Activated naive CD4-positive, alpha-beta T cell treated with anti-CD3 and anti-CD28 coated beads, Interleukin-2, amount 10 ng/mL, durations not matched to agents 7 days and 5 days (primary cell): ENCODE measurements at regions of chr7 and their contacts with region 1.

Region 1: GRCh38 chr7:2248984-2249694 is 7.1 kb downstream of the NUDT1 start:
- DNase-seq: peak; percentile 37
- H3K4me3 Mint-ChIP-seq: peak overlapping the region; percentile 33
- H3K27ac Mint-ChIP-seq: peak overlapping the region; percentile 26
- H3K4me1 Mint-ChIP-seq: peaks cover 45% of the 10 kb centered on the region
- H3K27me3 Mint-ChIP-seq: no peaks in the 10 kb centered on the region

Region 2: DNA sequence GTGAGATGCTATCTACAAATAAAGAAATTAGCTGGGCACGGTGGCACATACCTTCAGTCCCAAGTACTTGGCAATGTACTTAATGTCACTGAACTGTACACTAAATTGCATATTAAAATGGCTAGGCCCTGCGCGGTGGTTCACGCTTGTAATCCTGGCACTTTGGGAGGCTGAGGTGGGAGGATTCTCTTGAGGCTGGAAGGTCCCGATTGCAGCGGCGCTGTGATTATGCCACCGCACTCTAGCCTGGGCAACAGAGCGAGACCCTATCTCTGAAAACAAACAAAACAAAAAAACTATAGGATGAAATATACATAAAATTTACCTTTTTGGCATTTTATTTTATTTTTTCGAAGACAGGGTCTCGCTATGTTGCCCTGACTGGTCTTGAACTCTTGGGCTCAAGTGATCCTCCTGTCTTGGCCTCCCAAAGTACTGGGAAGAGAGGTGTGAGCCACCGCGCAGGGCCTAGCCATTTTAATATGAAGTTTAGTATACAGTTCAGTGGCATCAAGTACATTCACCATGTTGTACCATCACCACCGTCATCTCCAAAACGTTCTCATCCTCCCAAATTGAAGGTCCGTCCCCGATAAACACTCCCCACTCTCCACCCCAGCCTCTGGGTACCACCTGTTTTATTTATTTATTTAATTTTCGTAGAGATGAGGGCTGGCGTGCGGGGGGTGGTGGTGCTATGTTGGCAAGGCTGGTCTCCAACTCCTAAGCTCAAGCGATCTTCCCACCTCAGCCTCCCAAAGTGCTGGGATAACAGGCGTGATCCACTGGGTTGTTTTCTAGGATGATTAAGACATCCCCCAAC is 104.2 kb after region 1 on chr7:
- CTCF ChIA-PET with region 1: interaction called, 12 read pairs
- DNase-seq: peak; percentile 24
- H3K4me3 Mint-ChIP-seq: peak overlapping the region; percentile 79
- H3K27ac Mint-ChIP-seq: peak overlapping the region; percentile 98
- H3K4me1 Mint-ChIP-seq: peaks cover 28% of the 10 kb centered on the region
- H3K27me3 Mint-ChIP-seq: no peaks in the 10 kb centered on the region